ENCODE measurements at regions of chr6 and their contacts with region 1.

Region 1: GRCh38 chr6:137707590-137708360 is 159.3 kb upstream of the TNFAIP3 start:
- DNase-seq: peak; percentile 91 to 97 (median 96)
- H3K4me3 ChIP-seq: peak overlapping the region in 1 of 2 donors; percentile 36
- H3K4me3 Mint-ChIP-seq: peak overlapping the region; percentile 58 to 80 (median 72)
- H3K27ac ChIP-seq: peak overlapping the region; percentile 77
- H3K27ac Mint-ChIP-seq: peak overlapping the region; percentile 93 to 99 (median 98)
- H3K4me1 ChIP-seq: peaks cover 68% of the 10 kb centered on the region
- H3K4me1 Mint-ChIP-seq: peaks cover 39 to 70% (median 57%) of the 10 kb centered on the region in 4 donors
- H3K27me3 ChIP-seq: no peaks in the 10 kb centered on the region
- H3K27me3 Mint-ChIP-seq: peaks cover 0 to under 1% of the 10 kb centered on the region in 2 donors

Region 2: GRCh38 chr6:137291441-137291840 is 416.3 kb before region 1 on chr6:
- CTCF ChIA-PET with region 1: no interaction called
- POLR2A ChIA-PET with region 1: no interaction called
- intact Hi-C with region 1: no loop called
- DNase-seq: no peak
- H3K4me3 ChIP-seq: no peak overlapping the region
- H3K4me3 Mint-ChIP-seq: no peak overlapping the region
- H3K27ac ChIP-seq: no peak overlapping the region
- H3K27ac Mint-ChIP-seq: no peak overlapping the region
- H3K4me1 ChIP-seq: peaks cover 8% of the 10 kb centered on the region
- H3K4me1 Mint-ChIP-seq: peaks cover 8 to 14% (median 11%) of the 10 kb centered on the region in 4 donors
- H3K27me3 ChIP-seq: no peaks in the 10 kb centered on the region
- H3K27me3 Mint-ChIP-seq: peaks cover 0 to 7% of the 10 kb centered on the region in 2 donors

Region 3: DNA sequence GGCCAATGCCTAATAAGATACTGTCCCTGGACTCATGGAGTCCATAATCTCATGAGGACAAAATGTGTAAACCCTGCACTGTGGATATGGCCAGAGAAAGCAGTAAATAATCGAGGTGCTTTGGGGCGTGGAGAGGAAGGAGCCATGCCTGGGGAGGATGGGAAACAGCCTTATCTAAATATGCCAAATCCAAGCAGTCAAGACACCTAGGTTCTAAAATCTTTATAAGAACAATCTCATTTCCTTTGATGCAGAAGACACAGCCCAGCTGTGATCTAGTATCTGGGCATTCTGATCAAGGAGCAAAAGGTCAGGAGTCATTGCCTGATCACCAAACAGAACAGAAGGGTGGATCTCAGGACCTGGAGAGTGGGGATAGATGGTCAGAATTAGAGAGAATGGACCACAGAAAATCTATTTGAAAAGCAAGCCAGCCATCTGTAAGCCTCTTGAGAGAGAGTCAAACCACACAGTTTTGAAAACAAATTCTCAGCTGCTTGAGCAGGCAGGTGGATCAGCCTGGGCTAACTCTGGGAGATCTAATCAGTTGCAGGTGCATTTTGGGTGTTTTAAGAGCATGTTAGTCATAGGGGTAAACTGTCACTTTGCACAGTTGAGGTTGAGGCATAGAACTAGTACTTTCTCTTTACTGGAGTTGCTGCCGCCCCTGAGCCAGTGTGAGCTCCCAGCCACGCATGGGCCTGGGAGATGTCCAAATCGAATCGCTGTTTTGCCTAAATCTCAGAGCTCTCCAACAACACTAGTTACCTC is 28.5 kb after region 1 on chr6:
- CTCF ChIA-PET with region 1: interaction called, 5 read pairs
- POLR2A ChIA-PET with region 1: interaction called, 9 read pairs
- intact Hi-C with region 1: loop called (anchors 1 kb)
- DNase-seq: peak; percentile 45 to 71 (median 51)
- H3K4me3 ChIP-seq: no peak overlapping the region
- H3K4me3 Mint-ChIP-seq: peak overlapping the region in 6 of 8 donors; percentile 10 to 61 (median 48)
- H3K27ac ChIP-seq: peak overlapping the region; percentile 18
- H3K27ac Mint-ChIP-seq: peak overlapping the region; percentile 58 to 97 (median 91)
- H3K4me1 ChIP-seq: peaks cover 16% of the 10 kb centered on the region
- H3K4me1 Mint-ChIP-seq: peaks cover 10 to 14% (median 13%) of the 10 kb centered on the region in 4 donors
- H3K27me3 ChIP-seq: no peaks in the 10 kb centered on the region
- H3K27me3 Mint-ChIP-seq: no peaks in the 10 kb centered on the region

Region 4: GRCh38 chr6:137823826-137824555 is 116.2 kb after region 1 on chr6:
- CTCF ChIA-PET with region 1: no interaction called
- POLR2A ChIA-PET with region 1: interaction called, 15 read pairs
- intact Hi-C with region 1: loop called (anchors 1 kb)
- DNase-seq: peak; percentile 92 to 99 (median 97)
- H3K4me3 ChIP-seq: no peak overlapping the region
- H3K4me3 Mint-ChIP-seq: peak overlapping the region; percentile 52 to 87 (median 77)
- H3K27ac ChIP-seq: peak overlapping the region; percentile 95
- H3K27ac Mint-ChIP-seq: peak overlapping the region; percentile 93 to 100 (median 100)
- H3K4me1 ChIP-seq: peaks cover 74% of the 10 kb centered on the region
- H3K4me1 Mint-ChIP-seq: peaks cover 44 to 75% (median 59%) of the 10 kb centered on the region in 4 donors
- H3K27me3 ChIP-seq: no peaks in the 10 kb centered on the region
- H3K27me3 Mint-ChIP-seq: no peaks in the 10 kb centered on the region

Region 5: GRCh38 chr6:137975188-137975940 is 267.6 kb after region 1 on chr6:
- CTCF ChIA-PET with region 1: interaction called, 21 read pairs
- POLR2A ChIA-PET with region 1: interaction called, 17 read pairs
- intact Hi-C with region 1: loop called (anchors 1 kb)
- DNase-seq: peak; percentile 62 to 71 (median 67)
- H3K4me3 ChIP-seq: no peak overlapping the region
- H3K4me3 Mint-ChIP-seq: peak overlapping the region; percentile 67 to 93 (median 82)
- H3K27ac ChIP-seq: peak overlapping the region; percentile 57
- H3K27ac Mint-ChIP-seq: peak overlapping the region; percentile 87 to 99 (median 97)
- H3K4me1 ChIP-seq: peaks cover 37% of the 10 kb centered on the region
- H3K4me1 Mint-ChIP-seq: peaks cover 30 to 57% (median 34%) of the 10 kb centered on the region in 4 donors
- H3K27me3 ChIP-seq: no peaks in the 10 kb centered on the region
- H3K27me3 Mint-ChIP-seq: no peaks in the 10 kb centered on the region

Region 6: GRCh38 chr6:138007014-138007472 is 299.3 kb after region 1 on chr6:
- CTCF ChIA-PET with region 1: interaction called, 24 read pairs
- POLR2A ChIA-PET with region 1: no interaction called
- intact Hi-C with region 1: loop called (anchors 1 kb)
- DNase-seq: peak in 1 of 5 donors; percentile 3
- H3K4me3 ChIP-seq: no peak overlapping the region
- H3K4me3 Mint-ChIP-seq: no peak overlapping the region
- H3K27ac ChIP-seq: no peak overlapping the region
- H3K27ac Mint-ChIP-seq: peak overlapping the region in 1 of 7 donors; percentile 57
- H3K4me1 ChIP-seq: no peaks in the 10 kb centered on the region
- H3K4me1 Mint-ChIP-seq: no peaks in the 10 kb centered on the region
- H3K27me3 ChIP-seq: no peaks in the 10 kb centered on the region
- H3K27me3 Mint-ChIP-seq: peaks cover 0 to 3% of the 10 kb centered on the region in 2 donors

Region 7: GRCh38 chr6:138109042-138109997 is 401.5 kb after region 1 on chr6:
- CTCF ChIA-PET with region 1: interaction called, 7 read pairs
- POLR2A ChIA-PET with region 1: interaction called, 3 read pairs
- intact Hi-C with region 1: loop called (anchors 1 kb)
- DNase-seq: peak; percentile 69 to 75 (median 75)
- H3K4me3 ChIP-seq: no peak overlapping the region
- H3K4me3 Mint-ChIP-seq: peak overlapping the region in 2 of 8 donors; percentile 52 to 55
- H3K27ac ChIP-seq: no peak overlapping the region
- H3K27ac Mint-ChIP-seq: peak overlapping the region in 3 of 7 donors; percentile 8 to 65 (median 11)
- H3K4me1 ChIP-seq: peaks cover 25% of the 10 kb centered on the region
- H3K4me1 Mint-ChIP-seq: peaks cover 16 to 37% (median 17%) of the 10 kb centered on the region in 4 donors
- H3K27me3 ChIP-seq: no peaks in the 10 kb centered on the region
- H3K27me3 Mint-ChIP-seq: peaks cover 3% of the 10 kb centered on the region in 2 donors

Region 8: GRCh38 chr6:138287144-138287955 is 579.6 kb after region 1 on chr6:
- CTCF ChIA-PET with region 1: no interaction called
- POLR2A ChIA-PET with region 1: no interaction called
- intact Hi-C with region 1: no loop called
- DNase-seq: peak; percentile 26 to 53 (median 39)
- H3K4me3 ChIP-seq: no peak overlapping the region
- H3K4me3 Mint-ChIP-seq: peak overlapping the region in 1 of 8 donors; percentile 48
- H3K27ac ChIP-seq: no peak overlapping the region
- H3K27ac Mint-ChIP-seq: peak overlapping the region in 1 of 7 donors; percentile 31
- H3K4me1 ChIP-seq: no peaks in the 10 kb centered on the region
- H3K4me1 Mint-ChIP-seq: peaks cover 0 to 1% (median 0%) of the 10 kb centered on the region in 4 donors
- H3K27me3 ChIP-seq: no peaks in the 10 kb centered on the region
- H3K27me3 Mint-ChIP-seq: peaks cover 0 to 3% of the 10 kb centered on the region in 2 donors